Esophagus muscularis mucosa (tissue), 4 donors: ENCODE measurements at regions of chr1 and their contacts with region 1.

Region 1: GRCh38 chr1:44213222-44214112 is at the start of gene DMAP1:
- DNase-seq: peak; percentile 96
- H3K4me3 ChIP-seq: peak within 1 kb of the TSS; percentile 83 to 98 (median 90)
- H3K27ac ChIP-seq: peak within 1 kb of the TSS; percentile 79 to 84 (median 82)
- H3K4me1 ChIP-seq: peaks cover 16 to 33% (median 27%) of the 10 kb centered on the region in 4 donors
- H3K27me3 ChIP-seq: no peaks in the 10 kb centered on the region
- CTCF ChIP-seq: peak in 2 of 3 experiments; percentile 30 to 59
- EP300 ChIP-seq: no peak
- POLR2A ChIP-seq: no peak
- total RNA-seq, gene DMAP1: 24.0 to 34.6 (median 30.4) TPM

Region 2: DNA sequence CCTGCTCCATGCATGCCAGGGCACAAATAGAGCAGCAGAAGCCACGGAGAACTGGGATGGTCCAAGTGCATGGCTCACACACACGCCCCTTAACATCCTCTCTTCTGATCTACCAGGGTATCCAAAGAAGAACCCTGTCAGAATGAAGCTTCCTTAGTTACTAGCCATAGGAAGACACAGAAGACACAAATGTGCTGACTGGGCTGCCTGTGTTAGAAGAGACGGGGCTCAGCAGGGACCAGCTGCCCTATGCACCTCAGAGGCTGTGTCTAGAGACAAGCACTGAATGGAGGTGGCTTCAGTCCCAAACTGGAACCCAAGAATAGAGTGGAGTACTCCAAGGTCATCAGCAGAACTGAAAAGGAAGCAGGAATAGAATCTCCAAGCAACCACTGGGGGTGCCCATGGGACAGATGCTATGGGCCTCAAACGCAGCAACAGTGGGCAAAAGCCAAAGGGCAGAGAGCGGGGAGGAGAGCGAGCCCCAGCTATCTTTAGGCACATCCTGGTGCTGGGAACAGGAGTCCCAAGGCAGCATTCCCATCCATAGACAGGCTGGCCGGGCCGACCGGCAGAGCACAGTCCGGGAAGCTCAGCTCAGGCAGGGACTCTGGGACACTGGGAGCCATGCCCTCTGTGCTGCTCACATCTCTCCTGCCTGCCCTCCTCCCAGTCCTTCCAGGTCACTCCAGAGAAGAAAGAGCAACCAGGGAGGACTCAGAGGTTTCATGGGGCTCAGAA is 191.7 kb before region 1 on chr1:
- intact Hi-C with region 1: no loop called
- DNase-seq: no peak
- H3K4me3 ChIP-seq: no peak overlapping the region
- H3K27ac ChIP-seq: no peak overlapping the region
- H3K4me1 ChIP-seq: no peaks in the 10 kb centered on the region
- H3K27me3 ChIP-seq: no peaks in the 10 kb centered on the region
- CTCF ChIP-seq: no peak
- EP300 ChIP-seq: no peak
- POLR2A ChIP-seq: no peak

Region 3: DNA sequence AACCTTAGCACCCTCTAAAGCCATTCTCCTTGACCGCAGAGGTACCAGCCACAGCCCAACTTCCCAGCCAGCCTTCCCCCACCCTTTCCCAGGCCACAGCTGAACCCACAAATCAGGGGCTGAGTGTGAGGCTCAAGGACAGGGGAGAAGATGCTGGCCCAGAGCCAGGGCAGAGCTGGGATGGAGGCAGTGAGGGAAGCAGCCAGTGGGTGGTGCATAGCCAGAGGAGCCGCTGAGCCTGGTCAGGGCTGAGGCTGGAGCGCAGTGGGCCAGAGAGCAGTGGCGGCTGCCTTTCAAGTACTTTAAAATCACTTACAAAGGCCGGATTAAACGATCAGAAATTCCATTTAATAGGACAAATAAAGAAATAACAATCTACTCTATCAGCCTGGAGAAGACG is 36.1 kb after region 1 on chr1:
- intact Hi-C with region 1: no loop called
- DNase-seq: no peak
- H3K4me3 ChIP-seq: no peak overlapping the region
- H3K27ac ChIP-seq: no peak overlapping the region
- H3K4me1 ChIP-seq: peaks cover 0 to 6% (median 0%) of the 10 kb centered on the region in 4 donors
- H3K27me3 ChIP-seq: no peaks in the 10 kb centered on the region
- CTCF ChIP-seq: no peak
- EP300 ChIP-seq: no peak
- POLR2A ChIP-seq: no peak

Region 4: GRCh38 chr1:44275991-44276405 is 62.5 kb after region 1 on chr1:
- intact Hi-C with region 1: no loop called
- DNase-seq: no peak
- H3K4me3 ChIP-seq: no peak overlapping the region
- H3K27ac ChIP-seq: no peak overlapping the region
- H3K4me1 ChIP-seq: peaks cover 0 to 15% (median 14%) of the 10 kb centered on the region in 4 donors
- H3K27me3 ChIP-seq: no peaks in the 10 kb centered on the region
- CTCF ChIP-seq: no peak
- EP300 ChIP-seq: no peak
- POLR2A ChIP-seq: no peak

Region 5: DNA sequence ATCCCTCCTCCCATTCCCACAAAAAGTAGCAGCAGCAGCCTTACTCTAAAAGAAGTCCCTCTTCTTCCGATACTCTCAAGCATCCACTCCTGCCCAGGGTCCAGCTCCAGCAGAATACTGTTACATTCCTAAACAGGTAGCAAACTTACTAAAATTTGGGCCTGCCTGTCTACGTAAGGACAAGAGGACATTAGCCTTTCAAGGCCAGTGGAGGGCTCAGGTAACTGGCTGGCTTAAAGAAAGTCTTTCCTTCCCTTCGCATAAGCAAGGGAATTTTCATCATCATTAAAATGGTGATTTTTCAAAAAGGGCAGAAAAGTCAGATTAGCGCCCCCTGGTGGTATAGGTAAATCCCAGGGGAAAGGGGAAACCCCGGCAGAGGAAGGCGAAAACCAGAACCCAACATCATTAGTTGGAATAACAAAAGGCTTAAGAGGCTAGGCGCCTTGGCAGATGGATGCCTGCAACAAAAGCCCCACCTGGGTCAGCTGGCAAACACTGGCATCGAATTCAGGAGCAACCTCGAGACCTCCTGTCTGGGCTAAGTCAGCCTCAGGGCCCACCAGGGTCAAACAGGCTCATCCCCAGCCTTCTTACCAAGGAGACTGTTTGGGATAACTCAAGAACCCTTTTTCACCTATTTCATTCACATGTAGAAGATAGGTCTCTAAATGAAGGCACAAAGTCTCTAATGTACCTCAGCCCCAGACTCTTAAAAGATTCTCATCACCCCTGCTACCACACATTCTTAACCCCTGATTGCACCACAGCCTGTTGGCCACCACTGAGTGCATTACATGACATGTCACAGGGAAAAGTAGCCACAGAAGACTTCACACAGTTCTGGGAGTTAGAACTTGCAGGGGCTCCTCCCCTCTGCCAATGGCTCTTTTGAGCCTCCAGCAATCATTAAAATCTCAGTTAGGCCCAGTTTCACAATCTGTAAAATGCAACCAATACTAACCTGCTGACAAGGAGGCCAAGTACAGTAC is 104.9 kb after region 1 on chr1:
- intact Hi-C with region 1: loop called (anchors 5 kb)
- DNase-seq: no peak
- H3K4me3 ChIP-seq: no peak overlapping the region
- H3K27ac ChIP-seq: no peak overlapping the region
- H3K4me1 ChIP-seq: peaks cover 0 to 16% (median 0%) of the 10 kb centered on the region in 4 donors
- H3K27me3 ChIP-seq: no peaks in the 10 kb centered on the region
- CTCF ChIP-seq: peak; percentile 61 to 83 (median 73)
- EP300 ChIP-seq: no peak
- POLR2A ChIP-seq: no peak

Region 6: GRCh38 chr1:44354840-44355581 is 141.5 kb after region 1 on chr1 and contains the start of gene ERI3:
- intact Hi-C with region 1: loop called (anchors 10 kb)
- DNase-seq: peak; percentile 99
- H3K4me3 ChIP-seq: peak within 1 kb of the TSS; percentile 76 to 100 (median 98)
- H3K27ac ChIP-seq: peak within 1 kb of the TSS; percentile 77 to 89 (median 84)
- H3K4me1 ChIP-seq: peaks cover 16 to 38% (median 30%) of the 10 kb centered on the region in 4 donors
- H3K27me3 ChIP-seq: no peaks in the 10 kb centered on the region
- CTCF ChIP-seq: peak in 1 of 3 experiments; percentile 18
- EP300 ChIP-seq: no peak
- POLR2A ChIP-seq: peak; percentile 63
- total RNA-seq, gene ERI3: 40.4 to 56.6 (median 47.0) TPM

Region 7: DNA sequence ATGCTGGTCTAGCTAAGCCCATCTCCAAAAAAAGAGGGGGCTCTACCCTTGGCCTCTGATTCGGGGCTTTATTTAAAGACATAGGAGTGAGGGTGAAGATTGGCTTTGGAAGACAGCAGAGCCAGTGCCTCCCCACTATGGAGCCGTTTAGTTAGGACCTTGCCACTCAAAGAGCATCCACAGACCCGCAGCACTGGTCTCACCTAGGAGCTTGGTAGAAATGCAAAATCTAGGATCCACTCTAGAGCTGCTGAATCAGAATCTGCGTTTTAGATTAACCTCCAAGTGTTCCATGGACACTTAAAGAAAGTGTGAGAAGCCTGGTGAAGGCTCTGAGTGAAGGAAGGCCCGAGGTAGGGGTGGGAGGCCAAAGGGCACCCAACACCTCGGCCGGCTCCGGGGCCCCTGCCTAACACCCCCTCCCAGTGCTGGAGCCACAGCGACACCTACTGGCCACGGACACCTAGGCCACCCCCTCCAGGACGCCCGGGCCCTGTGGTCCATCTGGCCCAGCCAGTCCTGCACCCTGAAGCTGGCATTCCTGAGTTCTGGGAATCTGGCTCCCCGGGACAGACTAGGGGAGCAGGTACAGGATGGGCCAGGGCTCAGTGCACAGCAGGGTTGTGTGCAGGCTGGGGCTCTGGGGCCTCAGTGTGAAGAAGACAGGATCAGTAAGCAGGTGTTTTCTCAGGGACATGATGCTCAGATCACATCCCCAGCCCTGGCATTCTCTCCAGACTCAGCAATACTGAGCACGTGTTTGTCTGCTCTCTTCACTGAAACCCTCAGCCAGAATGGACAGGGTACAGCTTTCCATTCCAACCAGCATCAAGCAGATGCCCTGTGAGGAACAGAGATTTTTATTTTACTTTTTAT is 381.6 kb after region 1 on chr1:
- intact Hi-C with region 1: loop called (anchors 2 kb)
- DNase-seq: peak; percentile 95
- H3K4me3 ChIP-seq: no peak overlapping the region
- H3K27ac ChIP-seq: no peak overlapping the region
- H3K4me1 ChIP-seq: peaks cover 0 to 4% (median 2%) of the 10 kb centered on the region in 4 donors
- H3K27me3 ChIP-seq: peaks cover 0 to 38% (median 0%) of the 10 kb centered on the region in 4 donors
- CTCF ChIP-seq: peak in 2 of 3 experiments; percentile 92 to 93
- EP300 ChIP-seq: no peak
- POLR2A ChIP-seq: no peak

Region 8: DNA sequence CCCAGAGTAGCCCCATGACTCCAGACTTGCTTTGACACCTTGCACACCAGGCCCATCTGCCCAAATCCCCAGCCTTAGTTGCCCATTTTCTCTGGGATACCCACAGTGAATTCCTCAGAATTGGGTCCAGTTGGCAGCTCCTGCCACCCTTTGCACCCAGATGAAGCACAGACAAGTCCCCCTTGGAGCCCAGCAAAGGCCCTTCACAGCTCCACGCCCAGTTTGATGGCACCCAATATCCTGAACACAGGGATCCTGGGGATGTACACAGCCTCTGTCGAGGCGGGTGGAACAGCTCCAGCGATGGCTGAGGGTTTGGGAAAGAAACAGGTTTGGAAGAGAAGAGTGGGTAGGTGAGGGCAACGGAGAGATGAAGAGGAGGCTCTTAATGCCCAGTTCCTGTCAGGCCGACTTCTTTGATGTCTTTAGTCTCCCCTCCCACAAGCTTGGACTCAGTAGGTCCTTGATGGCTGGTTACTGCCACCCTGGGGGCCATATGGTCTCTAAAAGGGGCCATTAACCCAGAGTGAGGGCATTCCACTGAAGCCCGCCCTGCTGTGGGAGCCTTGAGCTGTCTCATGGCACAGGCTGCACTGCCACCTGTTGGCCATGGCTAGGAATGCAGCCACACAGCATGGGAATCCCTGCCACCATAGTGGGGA is 439.1 kb after region 1 on chr1:
- intact Hi-C with region 1: loop called (anchors 10 kb)
- DNase-seq: no peak
- H3K4me3 ChIP-seq: no peak overlapping the region
- H3K27ac ChIP-seq: peak overlapping the region; percentile 2 to 31 (median 25)
- H3K4me1 ChIP-seq: peaks cover 0 to 8% (median 2%) of the 10 kb centered on the region in 4 donors
- H3K27me3 ChIP-seq: no peaks in the 10 kb centered on the region
- CTCF ChIP-seq: peak; percentile 93 to 98 (median 97)
- EP300 ChIP-seq: no peak
- POLR2A ChIP-seq: no peak